SK-N-SH (cell line): ENCODE measurements at regions of chr22 and their contacts with region 1.

Region 1: GRCh38 chr22:32660292-32660691 is 141.2 kb upstream of the TIMP3 start:
- DNase-seq: peak; percentile 81
- H3K4me3 ChIP-seq: no peak overlapping the region
- H3K27ac ChIP-seq: no peak overlapping the region; a peak in 1 of 4 replicates
- H3K4me1 ChIP-seq: peaks cover 4 to 8% of the 10 kb centered on the region in 2 experiments; a peak in 1 of 4 replicates
- H3K27me3 ChIP-seq: no peaks in the 10 kb centered on the region
- CTCF ChIP-seq: peak; percentile 70
- EP300 ChIP-seq: no peak
- RAD21 ChIP-seq: peak; percentile 84

Region 2: DNA sequence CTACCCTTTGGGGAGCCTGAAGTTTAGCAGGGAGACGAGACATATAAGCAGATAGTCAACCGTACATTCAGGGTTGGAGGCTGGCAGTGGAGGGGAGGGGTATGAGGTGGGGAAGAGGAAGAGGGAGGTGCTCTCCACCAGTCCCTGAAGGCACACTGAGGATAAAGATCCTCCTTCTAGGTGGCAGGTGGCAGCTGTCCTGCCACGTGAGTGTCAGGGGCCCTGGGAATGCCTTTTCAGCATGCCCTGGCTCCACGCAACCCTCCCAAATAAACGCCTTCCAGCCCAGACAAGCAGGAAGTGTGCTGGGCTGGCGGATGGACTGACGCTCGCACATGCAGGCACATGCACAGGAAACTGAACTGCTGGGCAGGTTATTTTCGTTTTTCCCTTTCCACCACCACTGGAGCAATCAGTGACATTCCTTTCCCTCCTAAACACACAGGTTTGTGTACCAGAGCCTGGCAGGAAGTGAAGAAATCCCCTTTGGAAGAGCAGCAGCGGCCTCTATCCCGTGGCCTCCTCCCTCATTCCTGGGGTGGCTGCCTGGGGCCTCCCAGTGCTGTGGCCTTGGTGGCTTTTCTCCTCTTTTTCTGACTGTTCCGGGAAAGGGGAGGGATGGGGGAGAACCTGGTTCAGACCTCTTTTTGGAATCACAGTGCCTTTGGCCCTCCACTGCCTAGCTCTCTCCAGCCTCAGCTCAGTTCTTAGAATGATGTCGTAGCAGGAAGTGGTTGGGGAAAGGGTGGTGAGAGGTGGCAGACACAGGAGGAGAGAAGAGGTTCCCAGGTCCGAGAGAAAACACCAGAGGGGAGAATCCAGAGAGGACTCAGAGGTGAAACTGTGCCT is 15.8 kb before region 1 on chr22:
- CTCF ChIA-PET with region 1: interaction called, 11 read pairs
- POLR2A ChIA-PET with region 1: no interaction called
- DNase-seq: no peak
- H3K4me3 ChIP-seq: no peak overlapping the region
- H3K27ac ChIP-seq: no peak overlapping the region
- H3K4me1 ChIP-seq: peaks cover 0 to 2% of the 10 kb centered on the region in 2 experiments; a peak in 1 of 4 replicates
- H3K27me3 ChIP-seq: no peaks in the 10 kb centered on the region
- CTCF ChIP-seq: no peak
- EP300 ChIP-seq: no peak
- RAD21 ChIP-seq: no peak

Region 3: DNA sequence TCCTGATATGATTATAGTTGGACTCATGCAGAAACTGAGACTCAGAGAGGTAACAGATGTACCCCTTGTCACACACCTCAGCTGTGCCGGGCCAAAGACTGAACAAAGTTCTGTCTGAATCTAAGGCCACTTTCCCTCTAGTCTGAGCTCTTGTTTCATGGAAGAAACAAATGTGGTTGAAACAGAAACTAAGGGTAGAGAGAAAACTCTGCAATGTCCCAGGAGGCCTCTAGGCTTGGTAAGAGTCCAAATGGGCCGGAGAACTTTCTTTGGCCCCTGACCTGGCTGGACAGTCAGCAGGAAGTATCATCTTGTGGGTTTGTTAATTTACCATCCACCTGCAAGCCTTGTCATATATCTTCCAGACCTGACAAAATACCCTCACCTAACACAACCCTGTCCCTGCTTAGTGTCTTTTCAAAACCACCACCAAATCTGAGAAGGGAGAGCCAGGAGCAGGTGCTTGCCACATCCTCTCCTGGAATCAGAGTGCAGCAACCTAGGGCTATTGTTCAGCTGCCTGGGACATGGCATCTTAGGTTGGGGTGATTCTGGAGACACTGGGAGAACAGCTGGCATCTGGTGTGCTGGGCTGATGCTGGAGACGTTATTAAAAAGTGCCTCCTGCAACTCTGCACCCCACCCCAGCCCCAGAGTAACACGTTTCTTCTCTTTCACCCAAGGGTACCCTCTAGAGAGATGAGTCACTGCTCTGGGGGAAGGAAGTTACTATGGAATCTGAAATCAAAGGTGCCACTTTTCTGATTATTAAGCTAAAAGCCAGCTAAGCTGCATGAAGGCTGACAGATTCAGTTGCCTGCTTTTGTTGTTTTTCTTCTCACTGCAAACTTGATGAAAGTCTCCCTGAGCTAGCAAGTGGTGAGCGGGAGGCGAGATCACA is 14.9 kb after region 1 on chr22:
- CTCF ChIA-PET with region 1: interaction called, 29 read pairs
- POLR2A ChIA-PET with region 1: no interaction called
- DNase-seq: no peak
- H3K4me3 ChIP-seq: no peak overlapping the region
- H3K27ac ChIP-seq: no peak overlapping the region
- H3K4me1 ChIP-seq: no peaks in the 10 kb centered on the region
- H3K27me3 ChIP-seq: no peaks in the 10 kb centered on the region
- CTCF ChIP-seq: no peak
- EP300 ChIP-seq: no peak
- RAD21 ChIP-seq: no peak

Region 4: DNA sequence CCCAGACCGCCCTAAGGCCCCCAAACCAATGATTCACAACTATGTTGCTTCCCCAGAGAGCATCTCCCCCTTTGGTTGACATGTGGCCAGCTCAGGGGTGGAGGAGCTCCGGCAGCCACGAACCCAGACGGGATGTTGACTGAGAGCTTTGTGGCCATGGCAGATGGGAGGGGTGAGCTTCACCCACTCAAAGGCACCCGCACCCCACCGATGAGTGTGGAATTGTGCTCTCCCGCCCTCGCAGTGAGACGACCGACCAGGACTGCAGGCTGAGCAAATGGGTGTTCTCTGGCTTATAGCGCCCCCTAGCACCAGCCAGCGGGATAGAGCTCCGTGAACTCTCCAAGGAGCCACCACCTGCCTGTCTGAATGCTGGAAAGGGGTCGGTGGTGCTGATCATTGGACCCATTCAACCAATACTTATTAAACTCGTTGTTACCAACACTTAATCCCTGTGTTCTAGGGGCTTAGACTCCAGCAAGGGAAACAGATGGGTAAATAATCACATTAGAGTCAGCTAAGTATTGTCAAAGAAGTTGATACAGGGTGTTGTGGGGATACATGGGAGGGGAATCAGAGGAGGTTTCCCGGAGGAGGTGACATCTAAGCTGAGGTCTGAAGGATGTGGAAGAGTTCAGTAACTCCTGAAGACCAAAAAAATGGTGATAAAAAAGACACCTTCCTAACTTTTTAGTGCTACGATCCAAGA is 136.7 kb after region 1 on chr22:
- CTCF ChIA-PET with region 1: interaction called, 92 read pairs
- POLR2A ChIA-PET with region 1: no interaction called
- DNase-seq: peak; percentile 76
- H3K4me3 ChIP-seq: peak overlapping the region in 1 of 2 experiments; percentile 11; a peak in 1 of 4 replicates
- H3K27ac ChIP-seq: no peak overlapping the region
- H3K4me1 ChIP-seq: peaks cover 0 to 8% of the 10 kb centered on the region in 2 experiments; a peak in 1 of 4 replicates
- H3K27me3 ChIP-seq: no peaks in the 10 kb centered on the region
- CTCF ChIP-seq: peak; percentile 87
- EP300 ChIP-seq: no peak
- RAD21 ChIP-seq: peak; percentile 79

Region 5: DNA sequence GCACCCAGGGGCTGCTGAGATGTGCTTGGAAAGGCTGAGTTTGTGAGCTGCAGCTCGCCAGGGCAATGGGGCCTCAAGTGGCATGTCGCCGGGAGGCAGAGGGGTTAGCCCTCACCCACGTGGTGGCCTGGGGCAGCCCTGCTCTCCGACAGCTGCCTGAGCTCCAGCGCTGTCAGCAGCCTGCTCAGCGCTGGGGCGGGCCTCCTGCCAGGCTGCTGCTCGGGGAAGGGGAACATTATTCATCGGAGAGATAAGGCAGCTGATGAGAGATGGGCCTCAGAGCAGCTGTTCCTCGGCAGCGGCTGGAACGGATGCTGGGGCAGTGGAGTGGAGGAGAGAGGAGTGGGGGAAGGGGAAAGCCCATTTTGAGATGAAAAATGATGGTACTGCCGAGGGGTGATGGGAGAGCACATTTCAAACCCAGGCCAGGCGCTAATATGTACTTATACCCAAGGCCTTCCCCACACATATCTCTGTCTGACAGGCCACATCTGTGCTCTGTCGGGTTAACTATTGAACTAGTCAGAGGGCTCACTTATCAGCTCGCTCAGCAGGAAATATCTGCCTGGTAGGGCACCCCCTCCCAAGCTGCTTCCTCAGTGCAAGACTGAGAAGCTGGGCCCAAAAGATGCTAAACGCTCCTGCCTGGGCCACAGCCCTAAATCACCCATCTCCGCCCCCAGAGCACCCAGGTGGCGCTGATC is 220.8 kb after region 1 on chr22:
- CTCF ChIA-PET with region 1: interaction called, 11 read pairs
- POLR2A ChIA-PET with region 1: no interaction called
- DNase-seq: peak; percentile 89
- H3K4me3 ChIP-seq: no peak overlapping the region
- H3K27ac ChIP-seq: peak overlapping the region in 1 of 2 experiments; percentile 99; a peak in 2 of 4 replicates
- H3K4me1 ChIP-seq: peaks cover 0 to 42% of the 10 kb centered on the region in 2 experiments; a peak in 2 of 4 replicates
- H3K27me3 ChIP-seq: no peaks in the 10 kb centered on the region
- CTCF ChIP-seq: no peak
- EP300 ChIP-seq: peak in 1 of 2 experiments; percentile 94; a peak in 3 of 4 replicates
- RAD21 ChIP-seq: peak; percentile 32; the same call in 1 of the 2 replicates

Region 6: DNA sequence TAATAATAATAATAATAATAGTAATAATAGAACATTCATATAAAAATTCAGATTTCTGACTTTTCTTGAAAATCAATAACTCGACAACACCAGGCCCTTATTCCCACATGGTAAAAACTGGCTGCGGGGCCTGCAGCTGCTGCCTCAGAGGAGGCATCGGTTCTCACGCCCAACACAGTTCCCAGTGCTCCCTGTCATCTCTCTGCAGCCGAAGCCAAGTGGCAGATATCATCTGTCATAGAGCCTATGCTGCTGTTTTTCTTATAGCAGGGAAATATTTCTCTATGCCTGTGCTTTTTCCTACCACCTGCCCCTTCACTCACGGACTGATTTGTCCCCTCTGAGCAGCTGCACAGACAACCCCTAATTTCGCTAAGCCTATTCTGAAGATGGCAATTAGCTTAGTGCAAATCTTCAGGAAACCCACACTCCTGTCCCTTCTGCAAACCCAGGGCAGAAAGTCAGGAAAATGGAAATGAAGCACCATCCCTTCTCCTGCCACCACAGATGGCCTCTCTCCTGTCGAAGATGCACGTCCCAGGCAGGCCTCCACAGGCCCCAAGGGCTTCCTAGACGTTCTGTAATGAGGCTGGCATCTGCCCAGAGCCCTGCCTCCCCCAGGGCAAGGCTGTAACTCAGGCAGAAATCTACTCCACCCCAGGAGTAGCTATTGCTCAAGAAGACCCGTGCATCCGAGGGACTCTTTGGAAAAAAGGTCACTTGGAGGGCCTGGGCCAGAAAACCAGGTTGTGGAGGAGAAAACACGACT is 331.2 kb after region 1 on chr22:
- CTCF ChIA-PET with region 1: interaction called, 89 read pairs
- POLR2A ChIA-PET with region 1: interaction called, 5 read pairs
- DNase-seq: peak; percentile 49
- H3K4me3 ChIP-seq: no peak overlapping the region
- H3K27ac ChIP-seq: peak overlapping the region in 1 of 2 experiments; percentile 56; a peak in 2 of 4 replicates
- H3K4me1 ChIP-seq: peaks cover 0 to 24% of the 10 kb centered on the region in 2 experiments; a peak in 1 of 4 replicates
- H3K27me3 ChIP-seq: no peaks in the 10 kb centered on the region
- CTCF ChIP-seq: no peak
- EP300 ChIP-seq: no peak
- RAD21 ChIP-seq: no peak

Region 7: DNA sequence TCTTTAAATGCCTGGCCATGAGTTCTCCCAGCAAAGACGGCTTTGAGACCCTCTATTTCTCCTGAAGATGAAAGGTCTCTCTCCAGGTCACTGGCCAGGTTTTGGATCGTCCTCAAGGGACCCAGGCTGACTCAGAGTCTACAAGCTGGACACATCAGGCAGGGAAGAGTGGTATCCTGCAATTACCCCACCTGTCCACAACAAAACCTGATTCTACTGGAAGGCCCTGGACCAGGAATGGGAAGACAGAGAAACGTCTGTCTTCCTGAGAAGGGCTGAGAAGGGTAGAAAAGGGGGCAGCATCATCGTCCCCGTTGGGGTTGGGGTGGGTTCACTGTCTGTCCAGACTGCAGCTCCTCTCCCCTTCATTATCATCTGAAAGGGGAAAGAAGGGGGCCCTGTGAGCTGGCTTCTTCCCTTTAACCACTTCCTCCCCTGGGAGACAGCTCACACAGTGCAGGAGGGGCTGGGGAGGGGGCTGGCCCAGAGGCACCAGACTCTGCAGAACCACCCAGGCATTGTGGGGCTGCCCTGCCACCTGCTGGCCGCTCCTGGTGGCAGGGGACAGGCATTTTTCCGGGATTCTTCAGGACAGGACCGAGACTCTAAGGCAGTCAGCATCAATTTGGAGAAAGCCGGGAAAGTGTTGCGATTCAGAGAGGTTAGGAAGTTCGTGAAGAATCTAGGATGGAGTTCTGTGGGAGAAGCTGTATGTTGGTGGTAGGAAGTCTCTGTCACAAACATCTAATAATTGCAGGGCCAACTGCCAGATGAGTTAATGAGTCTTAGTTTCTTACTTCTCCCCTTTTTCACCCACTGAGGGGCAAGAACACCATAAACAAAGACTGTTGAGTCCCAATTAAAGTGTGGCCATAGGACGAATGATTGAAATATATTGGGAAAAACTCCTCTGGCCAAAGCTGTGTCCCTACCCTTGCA is 340.3 kb after region 1 on chr22:
- CTCF ChIA-PET with region 1: interaction called, 89 read pairs
- POLR2A ChIA-PET with region 1: no interaction called
- DNase-seq: peak; percentile 82
- H3K4me3 ChIP-seq: no peak overlapping the region; a peak in 1 of 4 replicates
- H3K27ac ChIP-seq: no peak overlapping the region
- H3K4me1 ChIP-seq: no peaks in the 10 kb centered on the region; a peak in 1 of 4 replicates
- H3K27me3 ChIP-seq: no peaks in the 10 kb centered on the region
- CTCF ChIP-seq: peak; percentile 84
- EP300 ChIP-seq: no peak
- RAD21 ChIP-seq: peak; percentile 94